ENCODE measurements at regions of chr16 and their contacts with region 1.

Region 1: DNA sequence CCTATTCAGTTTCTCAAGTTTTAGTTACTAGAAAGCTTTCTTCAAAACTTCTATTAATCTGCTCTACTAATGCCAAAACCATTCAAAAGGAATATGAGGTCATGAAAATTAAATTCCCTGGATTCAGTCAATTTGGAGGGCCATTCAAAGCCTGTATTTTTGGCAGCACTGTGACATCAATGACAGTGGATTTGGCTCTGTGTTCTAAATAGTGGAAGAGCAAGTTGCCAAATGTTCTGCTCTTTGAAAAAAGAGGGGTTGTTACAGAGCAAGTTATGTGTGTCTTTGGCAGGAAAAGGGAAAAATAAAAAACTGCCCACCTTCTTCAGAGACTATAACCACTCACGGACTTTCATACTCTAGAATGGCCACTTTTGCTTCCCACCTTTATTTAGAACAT is 3.2 kb upstream of the C16orf46 start:
- DNase-seq: peak; percentile 15

Region 2: GRCh38 chr16:81035398-81035974 is 44.7 kb before region 1 on chr16 and contains the start of gene ATMIN:
- in situ Hi-C with region 1: loop called (anchors 5 kb)
- DNase-seq: peak; percentile 83
- total RNA-seq, gene ATMIN: 46.9 and 59.6 TPM in 2 replicates

Region 3: DNA sequence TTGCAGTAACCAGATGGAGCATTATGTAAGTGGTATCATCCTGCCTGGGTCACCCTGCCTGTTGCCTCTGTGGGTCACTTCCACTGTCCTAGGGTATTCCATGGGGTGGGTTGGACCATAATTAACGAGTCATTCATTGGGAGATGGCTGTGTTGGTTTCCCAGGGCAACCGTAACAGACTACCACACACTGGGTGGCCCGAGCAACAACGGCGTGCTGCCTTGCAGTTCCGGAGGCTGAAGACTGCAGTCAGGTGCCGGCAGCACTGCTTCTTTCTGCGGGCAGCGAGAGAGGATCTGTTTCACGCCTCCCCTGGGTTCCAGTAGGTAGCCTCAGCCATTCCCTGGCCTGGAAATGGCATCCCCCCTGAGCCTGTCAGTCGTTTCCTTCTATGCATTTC is 335.5 kb after region 1 on chr16:
- in situ Hi-C with region 1: no loop called
- DNase-seq: peak; percentile 34